ENCODE measurements at regions of chr12 and their contacts with region 1.

Region 1: DNA sequence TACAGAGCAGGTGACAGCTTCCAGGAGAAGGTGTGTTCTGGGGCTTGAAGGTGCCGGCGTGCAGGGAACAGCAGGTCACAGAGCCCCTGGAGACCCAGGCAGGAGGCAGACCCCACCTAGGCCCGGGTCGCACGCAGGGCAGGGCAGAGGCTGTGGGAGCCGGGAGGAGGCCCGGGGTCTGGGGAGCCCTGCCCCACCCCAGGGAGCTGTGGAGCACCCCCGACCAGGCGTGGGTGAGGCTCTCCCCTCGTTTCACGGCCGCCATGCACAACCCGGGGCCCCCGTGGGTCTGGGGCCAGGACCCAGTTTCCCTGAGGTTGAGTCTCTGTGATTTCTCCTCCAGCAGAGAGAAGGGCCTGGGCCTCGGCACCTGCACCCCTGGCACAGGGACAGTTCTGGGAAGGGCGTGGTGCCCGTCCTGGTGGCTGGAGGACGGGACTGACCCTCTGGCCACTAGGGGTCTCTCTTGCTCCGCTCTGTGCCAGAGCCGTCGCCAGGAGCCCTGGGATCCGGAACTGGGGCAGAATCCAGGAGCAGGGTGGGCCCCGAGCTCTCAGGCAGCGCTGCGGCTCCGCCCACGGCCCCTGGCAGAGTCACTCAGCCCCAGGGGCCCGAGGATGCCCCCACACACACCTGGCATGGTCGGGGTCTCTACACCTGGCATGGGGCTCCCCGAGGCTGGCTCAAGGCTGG is 75.2 kb upstream of the FBRSL1 start:
- DNase-seq: peak; percentile 62 to 78 (median 72)
- H3K4me3 ChIP-seq: no peak overlapping the region
- H3K4me3 Mint-ChIP-seq: peak overlapping the region in 1 of 8 donors; percentile 39
- H3K27ac ChIP-seq: no peak overlapping the region
- H3K27ac Mint-ChIP-seq: peak overlapping the region in 2 of 7 donors; percentile 12 to 46
- H3K4me1 ChIP-seq: peaks cover 12% of the 10 kb centered on the region
- H3K4me1 Mint-ChIP-seq: peaks cover 0 to 4% (median under 1%) of the 10 kb centered on the region in 4 donors
- H3K27me3 ChIP-seq: no peaks in the 10 kb centered on the region
- H3K27me3 Mint-ChIP-seq: peaks cover 0 to 1% of the 10 kb centered on the region in 2 donors

Region 2: GRCh38 chr12:132153501-132154340 is 261.1 kb before region 1 on chr12:
- CTCF ChIA-PET with region 1: interaction called, 12 read pairs
- POLR2A ChIA-PET with region 1: no interaction called
- intact Hi-C with region 1: loop called (anchors 1 kb)
- DNase-seq: peak; percentile 74 to 78 (median 75)
- H3K4me3 ChIP-seq: peak overlapping the region; percentile 23 to 30
- H3K4me3 Mint-ChIP-seq: peak overlapping the region in 3 of 8 donors; percentile 8 to 48 (median 39)
- H3K27ac ChIP-seq: no peak overlapping the region
- H3K27ac Mint-ChIP-seq: peak overlapping the region in 2 of 7 donors; percentile 15 to 64
- H3K4me1 ChIP-seq: peaks cover 10% of the 10 kb centered on the region
- H3K4me1 Mint-ChIP-seq: peaks cover 0 to 5% (median 0%) of the 10 kb centered on the region in 4 donors
- H3K27me3 ChIP-seq: no peaks in the 10 kb centered on the region
- H3K27me3 Mint-ChIP-seq: no peaks in the 10 kb centered on the region

Region 3: GRCh38 chr12:132445884-132446632 is 31.3 kb after region 1 on chr12:
- CTCF ChIA-PET with region 1: interaction called, 10 read pairs
- POLR2A ChIA-PET with region 1: no interaction called
- intact Hi-C with region 1: no loop called
- DNase-seq: peak; percentile 65 to 88 (median 84)
- H3K4me3 ChIP-seq: peak overlapping the region; percentile 36 to 56
- H3K4me3 Mint-ChIP-seq: peak overlapping the region; percentile 79 to 92 (median 87)
- H3K27ac ChIP-seq: peak overlapping the region; percentile 86
- H3K27ac Mint-ChIP-seq: peak overlapping the region; percentile 99 to 100 (median 99)
- H3K4me1 ChIP-seq: peaks cover 44% of the 10 kb centered on the region
- H3K4me1 Mint-ChIP-seq: peaks cover 24 to 43% (median 35%) of the 10 kb centered on the region in 4 donors
- H3K27me3 ChIP-seq: no peaks in the 10 kb centered on the region
- H3K27me3 Mint-ChIP-seq: peaks cover 0 to 2% of the 10 kb centered on the region in 2 donors

Region 4: DNA sequence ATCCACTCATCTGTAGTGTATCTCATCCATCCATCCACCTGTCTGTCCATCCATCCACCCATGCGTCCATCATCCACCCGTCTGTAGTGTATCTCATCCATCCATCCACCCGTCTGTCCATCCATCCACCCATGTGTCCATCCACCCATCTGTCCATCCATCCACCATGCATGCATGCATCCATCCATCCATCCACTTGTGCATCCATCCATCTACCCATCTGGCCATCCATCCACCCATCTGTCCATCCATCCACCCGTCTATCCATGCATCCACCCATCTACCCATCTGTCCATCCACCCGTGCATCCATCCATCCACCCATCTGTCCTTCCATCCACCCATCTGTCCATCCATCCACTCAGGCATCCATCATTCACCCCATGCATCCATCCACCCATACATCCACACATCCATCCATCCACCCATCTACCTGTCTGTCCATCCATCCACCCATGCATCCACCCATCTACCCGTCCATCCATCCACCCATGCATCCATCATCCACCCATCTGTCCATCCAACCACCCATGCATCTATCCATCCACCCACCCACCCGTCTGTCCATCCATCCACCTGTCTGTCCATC is 103.7 kb after region 1 on chr12:
- CTCF ChIA-PET with region 1: interaction called, 87 read pairs
- POLR2A ChIA-PET with region 1: interaction called, 9 read pairs
- intact Hi-C with region 1: no loop called
- DNase-seq: no peak
- H3K4me3 ChIP-seq: no peak overlapping the region
- H3K4me3 Mint-ChIP-seq: no peak overlapping the region
- H3K27ac ChIP-seq: no peak overlapping the region
- H3K27ac Mint-ChIP-seq: peak overlapping the region in 5 of 7 donors; percentile 38 to 92 (median 65)
- H3K4me1 ChIP-seq: peaks cover 5% of the 10 kb centered on the region
- H3K4me1 Mint-ChIP-seq: peaks cover 14 to 31% (median 17%) of the 10 kb centered on the region in 4 donors
- H3K27me3 ChIP-seq: no peaks in the 10 kb centered on the region
- H3K27me3 Mint-ChIP-seq: no peaks in the 10 kb centered on the region

Region 5: DNA sequence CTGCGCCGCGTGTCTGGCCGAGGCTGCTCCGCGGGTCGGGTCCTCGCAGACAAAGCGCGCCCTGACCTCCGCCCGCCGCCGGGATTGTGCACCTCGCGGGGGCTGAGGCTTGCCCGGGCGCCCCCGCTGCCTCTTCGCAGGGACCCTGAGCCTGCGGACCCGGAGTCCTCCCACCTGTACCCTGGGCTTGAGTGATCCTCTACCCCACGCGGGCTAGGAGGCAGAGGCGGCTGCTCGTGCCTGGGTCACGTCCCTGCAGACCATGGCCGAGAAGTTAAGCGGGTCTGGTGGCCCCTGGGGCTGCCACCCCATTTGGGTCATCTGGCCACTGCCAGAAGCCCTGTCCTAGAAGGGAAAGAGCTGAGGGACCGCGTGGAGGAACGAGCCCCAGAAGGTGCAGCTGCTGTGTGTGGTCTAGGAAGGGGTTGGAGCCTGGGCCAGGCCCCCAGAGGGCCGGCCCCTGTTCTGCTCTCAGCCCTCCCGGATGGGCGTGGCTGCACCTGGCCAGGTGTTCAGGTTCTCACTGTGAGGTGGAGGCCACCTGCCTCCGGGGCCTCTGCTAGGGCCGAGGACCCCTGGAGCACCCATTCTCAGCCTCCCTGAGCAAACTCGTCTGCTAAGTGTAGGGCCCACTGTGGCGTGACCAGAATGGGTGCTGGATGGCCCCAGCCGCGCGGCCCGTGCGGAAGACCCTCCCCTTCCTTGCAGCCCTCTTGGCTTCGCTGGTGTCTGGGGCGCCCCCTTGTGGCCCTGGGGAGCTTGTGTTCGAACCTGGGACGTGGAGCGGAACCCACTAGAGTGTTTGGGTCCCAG is 146.0 kb after region 1 on chr12:
- CTCF ChIA-PET with region 1: interaction called, 10 read pairs
- POLR2A ChIA-PET with region 1: interaction called, 3 read pairs
- intact Hi-C with region 1: no loop called
- DNase-seq: peak; percentile 63 to 74 (median 68)
- H3K4me3 ChIP-seq: peak overlapping the region in 1 of 2 donors; percentile 19
- H3K4me3 Mint-ChIP-seq: peak overlapping the region; percentile 54 to 80 (median 70)
- H3K27ac ChIP-seq: no peak overlapping the region
- H3K27ac Mint-ChIP-seq: peak overlapping the region in 2 of 7 donors; percentile 18 to 30
- H3K4me1 ChIP-seq: peaks cover 24% of the 10 kb centered on the region
- H3K4me1 Mint-ChIP-seq: peaks cover 8 to 36% (median 15%) of the 10 kb centered on the region in 4 donors
- H3K27me3 ChIP-seq: no peaks in the 10 kb centered on the region
- H3K27me3 Mint-ChIP-seq: peaks cover 0 to 2% of the 10 kb centered on the region in 2 donors

Region 6: GRCh38 chr12:132717531-132718387 is 303.0 kb after region 1 on chr12:
- CTCF ChIA-PET with region 1: no interaction called
- POLR2A ChIA-PET with region 1: no interaction called
- intact Hi-C with region 1: no loop called
- DNase-seq: no peak
- H3K4me3 ChIP-seq: no peak overlapping the region
- H3K4me3 Mint-ChIP-seq: no peak overlapping the region
- H3K27ac ChIP-seq: no peak overlapping the region
- H3K27ac Mint-ChIP-seq: no peak overlapping the region
- H3K4me1 ChIP-seq: peaks cover 4% of the 10 kb centered on the region
- H3K4me1 Mint-ChIP-seq: peaks cover 0 to 13% (median 7%) of the 10 kb centered on the region in 4 donors
- H3K27me3 ChIP-seq: no peaks in the 10 kb centered on the region
- H3K27me3 Mint-ChIP-seq: no peaks in the 10 kb centered on the region

Region 7: DNA sequence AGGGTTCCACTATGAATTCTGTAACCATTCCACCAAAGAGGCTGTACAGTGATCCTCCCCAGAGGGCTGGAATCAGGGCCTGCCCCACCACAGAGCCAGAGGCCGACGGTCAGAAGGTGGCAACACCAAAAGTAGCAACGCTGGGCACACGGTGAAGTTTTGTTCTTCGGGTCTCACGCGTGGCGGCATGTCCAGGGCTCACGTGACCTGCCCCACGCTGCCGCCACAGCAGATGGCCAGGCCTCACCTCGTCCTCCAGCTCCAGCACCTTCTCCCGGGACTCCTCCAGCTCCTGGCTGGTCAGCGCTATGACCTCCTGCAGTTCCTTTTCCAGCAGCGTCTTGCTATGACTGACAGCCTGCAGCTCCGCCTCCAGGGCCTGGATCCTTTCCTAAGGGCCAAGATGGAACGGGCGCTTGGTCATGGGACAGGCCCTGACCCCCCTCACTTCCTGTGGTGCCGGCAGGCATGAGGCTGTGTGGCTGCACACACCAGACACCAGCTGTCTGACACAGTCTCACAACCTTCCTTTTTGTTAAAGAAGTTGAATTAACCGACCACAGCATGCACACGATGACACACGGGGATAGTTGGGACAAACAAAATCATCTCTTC is 369.2 kb after region 1 on chr12:
- CTCF ChIA-PET with region 1: no interaction called
- POLR2A ChIA-PET with region 1: no interaction called
- intact Hi-C with region 1: no loop called
- DNase-seq: no peak
- H3K4me3 ChIP-seq: no peak overlapping the region
- H3K4me3 Mint-ChIP-seq: peak overlapping the region in 1 of 8 donors; percentile 45
- H3K27ac ChIP-seq: no peak overlapping the region
- H3K27ac Mint-ChIP-seq: no peak overlapping the region
- H3K4me1 ChIP-seq: no peaks in the 10 kb centered on the region
- H3K4me1 Mint-ChIP-seq: peaks cover 0 to 6% (median 0%) of the 10 kb centered on the region in 4 donors
- H3K27me3 ChIP-seq: no peaks in the 10 kb centered on the region
- H3K27me3 Mint-ChIP-seq: no peaks in the 10 kb centered on the region